ENCODE measurements at regions of chr1 and their contacts with region 1.

Region 1: DNA sequence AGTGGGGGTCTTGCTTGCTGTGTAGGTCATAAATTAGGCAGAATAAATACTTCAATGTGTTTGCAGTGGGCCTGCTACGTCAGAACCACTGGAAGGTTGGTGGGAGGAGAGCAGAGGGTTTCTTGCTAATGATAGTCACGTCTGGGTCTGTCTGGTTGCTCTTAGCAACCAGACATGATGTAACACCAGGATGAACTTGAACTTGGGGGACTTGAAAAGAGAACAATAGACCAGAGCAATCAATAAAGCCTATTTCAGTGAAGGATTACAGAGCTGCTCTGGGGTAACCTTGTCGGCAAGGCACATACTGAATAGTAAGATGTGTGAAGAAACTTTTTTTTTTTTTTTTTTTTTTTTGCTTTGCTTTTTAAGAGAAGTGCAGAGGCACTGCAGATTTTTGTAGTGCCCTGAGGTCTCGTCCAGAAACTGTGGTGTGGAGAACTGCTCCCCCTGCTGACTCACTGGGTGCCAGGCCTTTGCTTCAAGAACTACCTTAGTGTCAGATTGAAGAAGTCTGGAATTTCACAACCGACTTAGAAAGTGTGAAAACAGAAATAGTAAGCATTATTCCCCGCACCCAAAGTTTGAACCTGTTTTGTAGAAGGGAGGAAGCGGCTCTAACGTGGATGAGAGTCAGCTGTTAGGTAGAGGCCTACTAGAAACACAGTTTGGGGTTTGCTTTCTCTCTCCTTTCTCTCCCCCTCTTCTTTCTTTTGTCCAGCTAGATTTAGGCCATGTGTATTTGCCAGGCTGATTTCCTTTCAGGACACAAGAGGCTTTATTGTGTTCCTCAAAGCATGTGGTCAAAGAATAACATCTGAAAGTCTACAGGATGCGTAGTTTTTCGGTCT is 271.6 kb downstream of the TM2D1 start:
- DNase-seq: peak; percentile 86
- H3K4me3 Mint-ChIP-seq: no peak overlapping the region
- H3K27ac Mint-ChIP-seq: no peak overlapping the region
- H3K4me1 Mint-ChIP-seq: peaks cover 9% of the 10 kb centered on the region
- H3K27me3 Mint-ChIP-seq: no peaks in the 10 kb centered on the region

Region 2: GRCh38 chr1:60848583-60849188 is 604.6 kb before region 1 on chr1:
- CTCF ChIA-PET with region 1: no interaction called
- intact Hi-C with region 1: loop called (anchors 1 kb)
- DNase-seq: no peak
- H3K4me3 Mint-ChIP-seq: no peak overlapping the region
- H3K27ac Mint-ChIP-seq: no peak overlapping the region
- H3K4me1 Mint-ChIP-seq: no peaks in the 10 kb centered on the region
- H3K27me3 Mint-ChIP-seq: peaks cover 10% of the 10 kb centered on the region

Region 3: DNA sequence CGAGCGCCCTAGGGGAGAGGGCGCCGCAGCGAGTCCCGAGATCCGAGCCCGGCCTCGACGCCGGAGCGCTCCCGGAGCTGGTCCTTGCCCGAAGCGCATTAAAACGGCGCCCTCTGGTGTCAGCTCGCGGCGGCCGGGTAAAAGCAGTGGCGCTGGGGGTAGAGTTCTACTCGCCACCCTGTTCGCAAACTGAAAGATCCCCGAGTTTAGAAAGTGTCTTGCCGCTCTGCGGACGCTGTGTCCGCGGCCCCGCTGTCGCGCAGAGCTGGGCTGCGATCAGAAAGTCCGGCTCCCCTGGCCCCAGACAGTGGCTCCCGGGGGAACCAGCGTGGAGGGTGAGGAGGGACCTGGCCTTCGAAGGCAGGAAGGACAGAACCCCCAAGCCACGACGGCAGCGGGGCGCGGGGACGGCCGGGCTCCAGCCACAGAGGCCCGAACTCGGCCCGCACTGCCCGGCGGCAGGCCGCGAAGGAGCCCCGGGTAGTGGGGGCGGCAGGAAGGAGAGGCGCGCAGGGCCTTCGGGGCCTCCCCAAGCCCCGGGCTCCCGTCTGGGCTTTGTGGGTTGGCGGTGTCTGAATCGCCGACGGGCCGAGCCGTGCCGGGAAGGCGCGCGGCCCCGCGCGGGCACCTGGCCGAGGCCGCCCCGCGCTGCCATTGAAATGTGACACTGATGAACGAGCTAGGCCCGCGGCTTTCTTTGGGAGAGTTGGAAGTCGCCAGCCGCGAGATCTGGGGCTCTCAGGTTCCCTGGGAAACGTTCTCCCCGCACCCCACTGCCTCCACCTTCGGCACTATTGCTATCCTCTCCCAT is 410.1 kb before region 1 on chr1:
- CTCF ChIA-PET with region 1: interaction called, 6 read pairs
- intact Hi-C with region 1: loop called (anchors 2 kb)
- DNase-seq: peak; percentile 89
- H3K4me3 Mint-ChIP-seq: peak overlapping the region; percentile 62
- H3K27ac Mint-ChIP-seq: no peak overlapping the region
- H3K4me1 Mint-ChIP-seq: peaks cover 5% of the 10 kb centered on the region
- H3K27me3 Mint-ChIP-seq: peaks cover 26% of the 10 kb centered on the region

Region 4: GRCh38 chr1:61202854-61203598 is 250.3 kb before region 1 on chr1:
- CTCF ChIA-PET with region 1: interaction called, 4 read pairs
- intact Hi-C with region 1: loop called (anchors 10 kb)
- DNase-seq: no peak
- H3K4me3 Mint-ChIP-seq: no peak overlapping the region
- H3K27ac Mint-ChIP-seq: no peak overlapping the region
- H3K4me1 Mint-ChIP-seq: no peaks in the 10 kb centered on the region
- H3K27me3 Mint-ChIP-seq: peaks cover 2% of the 10 kb centered on the region

Region 5: DNA sequence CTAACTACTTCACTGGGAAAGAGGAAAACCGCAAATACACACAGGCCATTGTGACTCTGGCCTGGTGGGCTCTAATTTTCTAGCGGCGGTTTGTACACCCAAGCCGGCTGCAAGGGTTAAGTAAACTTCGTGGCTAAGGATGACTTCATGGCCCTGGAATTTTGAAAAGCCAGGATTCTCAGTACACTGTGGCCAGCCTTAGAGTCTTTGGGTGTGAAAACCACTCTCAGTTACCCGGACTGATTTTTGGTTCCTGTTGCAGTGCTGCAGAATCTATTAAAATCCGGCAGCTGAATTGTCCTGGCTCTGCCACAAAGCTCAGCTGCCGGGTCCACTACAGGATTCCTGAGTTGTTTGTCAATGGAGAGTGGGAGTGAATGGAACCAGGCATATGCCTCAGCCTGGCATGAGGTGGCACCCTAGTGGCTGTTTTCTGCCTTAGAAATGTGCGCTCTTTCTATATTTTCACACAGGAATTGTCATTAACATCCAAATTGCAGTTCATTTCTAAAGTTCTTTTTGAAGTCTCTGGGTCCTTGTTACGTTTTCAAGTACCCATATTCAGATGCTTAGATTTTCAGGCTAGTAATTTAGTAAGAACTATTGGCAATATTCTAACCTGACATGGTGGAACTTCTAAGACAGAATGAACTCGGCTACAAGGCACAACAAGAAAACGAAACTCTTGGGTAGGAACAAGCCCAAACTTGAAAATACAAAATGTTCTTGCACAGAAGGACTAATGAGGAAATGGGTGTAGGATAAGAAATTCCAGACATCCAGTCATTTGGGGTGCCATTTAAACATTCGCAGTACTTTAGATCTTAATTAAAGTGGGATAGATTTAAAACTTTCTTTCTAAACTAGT is 115.1 kb before region 1 on chr1:
- CTCF ChIA-PET with region 1: no interaction called
- intact Hi-C with region 1: loop called (anchors 5 kb)
- DNase-seq: no peak
- H3K4me3 Mint-ChIP-seq: no peak overlapping the region
- H3K27ac Mint-ChIP-seq: no peak overlapping the region
- H3K4me1 Mint-ChIP-seq: no peaks in the 10 kb centered on the region
- H3K27me3 Mint-ChIP-seq: peaks cover under 1% of the 10 kb centered on the region

Region 6: DNA sequence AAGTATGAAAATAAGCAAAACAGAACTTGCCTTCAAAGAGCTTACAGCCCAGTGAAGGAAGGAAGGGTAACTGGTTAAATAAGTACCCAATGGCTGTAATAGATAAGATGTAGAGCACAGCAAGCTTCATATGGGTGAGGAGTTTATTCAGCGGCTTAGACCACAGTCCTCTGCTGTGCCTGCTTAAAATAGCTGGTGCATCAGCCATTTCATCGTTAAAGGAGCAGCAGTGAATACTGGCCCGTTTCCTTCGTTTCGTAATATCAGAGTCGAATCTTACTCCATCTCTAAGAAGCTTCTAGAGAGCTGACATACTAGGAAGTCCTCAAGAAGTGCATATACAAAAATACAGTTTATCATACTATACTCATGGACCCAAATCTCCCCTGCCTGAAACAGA is 84.5 kb before region 1 on chr1:
- CTCF ChIA-PET with region 1: no interaction called
- intact Hi-C with region 1: no loop called
- DNase-seq: no peak
- H3K4me3 Mint-ChIP-seq: no peak overlapping the region
- H3K27ac Mint-ChIP-seq: no peak overlapping the region
- H3K4me1 Mint-ChIP-seq: no peaks in the 10 kb centered on the region
- H3K27me3 Mint-ChIP-seq: no peaks in the 10 kb centered on the region

Region 7: DNA sequence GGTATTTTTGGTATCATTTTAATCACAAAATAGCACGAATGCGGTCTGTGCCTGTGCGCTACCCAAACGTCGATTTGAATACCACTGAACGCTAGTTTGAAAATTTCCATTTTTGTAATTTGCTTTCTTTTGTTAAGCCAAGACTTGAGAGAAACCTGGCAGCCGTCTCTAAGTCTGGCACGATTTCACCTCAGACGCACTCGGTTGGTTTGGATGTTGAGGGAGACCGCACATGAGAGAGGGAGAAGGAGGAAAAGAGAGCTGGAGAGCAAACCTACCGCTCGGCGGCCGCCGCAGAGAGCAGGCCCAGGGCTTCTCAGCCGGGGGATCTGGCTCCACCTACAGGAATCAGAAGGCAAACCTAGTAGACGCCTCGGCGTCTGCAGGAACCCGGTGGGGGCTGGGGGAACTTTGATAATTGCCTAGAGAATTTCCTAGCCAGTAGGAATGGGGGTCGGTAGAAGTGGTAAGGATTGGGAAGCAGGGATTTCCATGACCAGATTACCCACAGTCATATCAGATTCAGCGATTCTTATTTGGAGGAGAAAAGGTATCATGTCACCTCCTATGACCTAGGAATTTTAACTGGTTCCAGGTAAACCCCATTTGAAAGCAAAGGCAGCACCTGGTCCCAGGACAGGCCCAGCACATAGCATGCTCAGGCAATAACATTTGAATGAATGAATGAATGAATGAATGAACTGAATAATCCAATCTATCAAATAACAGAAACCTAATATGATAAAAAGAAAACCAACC is 188.4 kb after region 1 on chr1:
- CTCF ChIA-PET with region 1: no interaction called
- intact Hi-C with region 1: loop called (anchors 1 kb)
- DNase-seq: peak; percentile 84
- H3K4me3 Mint-ChIP-seq: peak overlapping the region; percentile 68
- H3K27ac Mint-ChIP-seq: peak overlapping the region; percentile 38
- H3K4me1 Mint-ChIP-seq: peaks cover 10% of the 10 kb centered on the region
- H3K27me3 Mint-ChIP-seq: peaks cover 3% of the 10 kb centered on the region

Measured in activated naive CD4-positive, alpha-beta T cell treated with anti-CD3 and anti-CD28 coated beads for 36 hours (primary cell).